ENCODE measurements at regions of chr2 and their contacts with region 1.

Region 1: DNA sequence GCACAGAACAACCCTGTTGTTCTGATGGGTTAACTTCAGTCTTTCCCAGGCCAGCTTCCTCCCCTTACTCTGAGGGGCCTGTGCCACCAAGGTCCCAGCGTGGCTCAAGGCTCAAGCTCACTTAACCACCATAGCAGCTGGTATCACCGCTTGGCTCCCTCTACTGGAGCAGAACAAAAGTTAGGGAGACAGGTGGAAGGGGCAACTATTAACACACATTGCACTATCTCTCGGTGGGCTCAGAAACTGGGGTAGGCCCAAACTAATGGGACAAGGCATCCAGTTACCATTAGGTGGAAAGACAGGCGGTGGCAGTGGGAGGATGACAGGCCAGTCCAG is 88.7 kb upstream of the ATL2 start:
- DNase-seq: no peak
- H3K4me3 Mint-ChIP-seq: no peak overlapping the region
- H3K27ac Mint-ChIP-seq: no peak overlapping the region
- H3K4me1 Mint-ChIP-seq: peaks cover 10% of the 10 kb centered on the region
- H3K27me3 Mint-ChIP-seq: peaks cover 10% of the 10 kb centered on the region

Region 2: DNA sequence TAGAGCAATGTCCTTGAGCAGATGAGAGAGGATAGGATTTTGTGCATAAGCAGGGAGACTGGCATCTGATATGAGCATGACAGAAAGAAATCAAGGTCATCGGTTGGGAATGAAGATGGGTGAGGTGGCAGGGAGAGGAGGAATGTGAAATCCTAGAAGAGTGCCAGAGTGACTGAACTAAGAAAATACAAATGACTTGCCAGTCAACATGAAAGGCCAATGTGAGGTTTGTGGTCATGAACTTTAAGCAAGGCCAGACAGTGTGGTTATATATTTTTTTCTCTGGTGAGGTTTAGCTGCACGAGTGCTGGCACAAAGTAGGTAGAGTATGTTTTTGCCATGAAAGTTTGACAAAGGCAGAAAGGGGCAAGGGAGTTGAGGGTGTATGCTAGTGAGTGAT is 1100.1 kb before region 1 on chr2:
- intact Hi-C with region 1: loop called (anchors 1 kb)
- DNase-seq: no peak
- H3K4me3 Mint-ChIP-seq: no peak overlapping the region
- H3K27ac Mint-ChIP-seq: no peak overlapping the region
- H3K4me1 Mint-ChIP-seq: no peaks in the 10 kb centered on the region
- H3K27me3 Mint-ChIP-seq: peaks cover 31% of the 10 kb centered on the region

Region 3: DNA sequence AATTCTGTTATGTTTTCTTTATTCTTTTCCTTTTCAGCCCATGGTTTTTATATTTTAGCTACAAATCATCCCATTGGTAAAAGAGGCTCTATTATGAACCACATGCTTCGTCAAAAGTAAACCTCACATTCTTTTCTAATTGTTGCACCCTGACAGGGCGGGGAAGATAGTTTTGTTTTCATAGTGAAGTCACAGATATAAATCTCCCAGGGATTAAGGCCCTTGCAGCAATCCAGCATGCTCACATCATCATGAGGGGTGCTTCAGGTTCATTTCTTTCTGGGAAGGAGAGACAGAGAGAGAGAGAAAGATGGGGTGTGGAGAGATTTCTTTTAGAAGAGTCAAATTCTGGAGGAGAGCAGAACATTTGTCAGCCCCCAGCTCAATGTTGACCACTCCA is 669.8 kb before region 1 on chr2:
- intact Hi-C with region 1: no loop called
- DNase-seq: no peak
- H3K4me3 Mint-ChIP-seq: no peak overlapping the region
- H3K27ac Mint-ChIP-seq: no peak overlapping the region
- H3K4me1 Mint-ChIP-seq: peaks cover 4% of the 10 kb centered on the region
- H3K27me3 Mint-ChIP-seq: peaks cover 2% of the 10 kb centered on the region

Region 4: GRCh38 chr2:38037757-38038621 is 427.8 kb before region 1 on chr2:
- intact Hi-C with region 1: loop called (anchors 5 kb)
- DNase-seq: peak; percentile 5
- H3K4me3 Mint-ChIP-seq: peak overlapping the region; percentile 71
- H3K27ac Mint-ChIP-seq: peak overlapping the region; percentile 91
- H3K4me1 Mint-ChIP-seq: peaks cover 22% of the 10 kb centered on the region
- H3K27me3 Mint-ChIP-seq: peaks cover 22% of the 10 kb centered on the region

Region 5: GRCh38 chr2:38106405-38107094 is 359.2 kb before region 1 on chr2:
- intact Hi-C with region 1: loop called (anchors 10 kb)
- DNase-seq: no peak
- H3K4me3 Mint-ChIP-seq: peak overlapping the region; percentile 53
- H3K27ac Mint-ChIP-seq: peak overlapping the region; percentile 57
- H3K4me1 Mint-ChIP-seq: peaks cover 27% of the 10 kb centered on the region
- H3K27me3 Mint-ChIP-seq: no peaks in the 10 kb centered on the region

Region 6: DNA sequence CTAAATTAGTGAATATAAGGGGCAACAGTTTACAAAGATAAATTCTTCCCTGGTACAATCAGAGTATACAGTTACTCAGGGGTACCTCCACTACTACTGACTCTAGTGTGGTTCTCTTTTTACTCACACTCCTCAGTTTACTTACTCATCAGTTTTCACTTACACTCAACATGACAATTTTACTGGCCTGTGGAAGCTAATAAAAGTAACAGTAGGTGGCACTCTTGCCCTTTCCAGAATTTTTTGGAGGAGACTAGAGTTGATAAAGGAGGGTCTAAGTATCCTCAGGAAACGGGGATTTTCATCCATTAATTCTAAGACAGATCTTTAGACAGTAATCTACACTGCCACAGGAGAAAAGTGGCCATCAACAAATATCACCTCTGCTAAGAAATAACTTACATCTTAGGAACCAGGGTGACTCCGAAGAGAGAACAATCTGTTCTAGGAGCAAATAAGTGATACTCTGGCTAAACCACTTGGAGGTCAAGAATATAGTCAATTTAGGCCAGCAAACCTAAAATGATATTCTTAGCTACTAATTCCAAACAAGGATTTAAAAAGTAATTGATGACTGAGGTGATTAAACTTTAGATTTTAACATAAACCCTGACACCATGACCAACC is 149.9 kb before region 1 on chr2:
- intact Hi-C with region 1: loop called (anchors 2 kb)
- DNase-seq: peak; percentile 16
- H3K4me3 Mint-ChIP-seq: no peak overlapping the region
- H3K27ac Mint-ChIP-seq: no peak overlapping the region
- H3K4me1 Mint-ChIP-seq: peaks cover 19% of the 10 kb centered on the region
- H3K27me3 Mint-ChIP-seq: no peaks in the 10 kb centered on the region

Region 7: GRCh38 chr2:38387887-38388286 is 77.9 kb before region 1 on chr2:
- intact Hi-C with region 1: loop called (anchors 1 kb)
- DNase-seq: peak; percentile 9
- H3K4me3 Mint-ChIP-seq: no peak overlapping the region
- H3K27ac Mint-ChIP-seq: no peak overlapping the region
- H3K4me1 Mint-ChIP-seq: peaks cover 23% of the 10 kb centered on the region
- H3K27me3 Mint-ChIP-seq: peaks cover 11% of the 10 kb centered on the region

Region 8: GRCh38 chr2:38432820-38433606 is 32.7 kb before region 1 on chr2:
- intact Hi-C with region 1: no loop called
- DNase-seq: no peak
- H3K4me3 Mint-ChIP-seq: no peak overlapping the region
- H3K27ac Mint-ChIP-seq: no peak overlapping the region
- H3K4me1 Mint-ChIP-seq: no peaks in the 10 kb centered on the region
- H3K27me3 Mint-ChIP-seq: peaks cover 10% of the 10 kb centered on the region

Region 9: DNA sequence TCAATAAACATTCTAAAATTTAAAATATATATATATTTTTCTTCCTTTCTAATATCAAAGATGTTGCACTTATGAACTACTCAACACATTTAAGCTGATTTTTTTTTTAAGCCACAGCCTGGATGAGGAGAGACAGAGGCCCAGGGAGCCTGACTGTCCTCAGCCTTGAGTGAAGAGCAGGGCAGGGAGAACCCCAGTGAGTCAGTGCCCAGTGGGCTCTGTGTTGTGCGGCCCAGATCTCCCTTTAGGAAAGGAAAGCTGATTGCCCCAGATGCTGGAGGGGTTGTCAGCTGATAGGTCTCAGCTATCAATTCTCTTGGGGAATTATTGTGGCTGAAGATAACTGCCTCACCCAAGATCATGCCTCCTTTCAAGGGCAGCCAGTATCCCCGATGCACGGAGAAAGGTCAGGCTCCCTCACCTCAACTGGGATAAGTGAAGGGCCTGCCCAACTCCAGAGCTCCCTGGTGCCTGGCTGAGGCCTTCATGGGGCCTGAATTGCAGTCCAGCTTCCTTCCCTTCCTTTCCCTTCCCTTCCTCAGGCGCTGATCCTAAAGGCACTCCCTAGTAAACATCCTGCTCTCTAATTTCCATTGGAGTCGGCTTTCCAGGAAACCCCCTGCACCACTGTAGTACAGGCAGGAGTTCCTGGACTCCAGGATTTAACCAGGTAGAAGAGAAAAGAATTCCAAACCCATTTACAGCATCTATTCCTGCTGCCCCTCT is 18.2 kb after region 1 on chr2:
- intact Hi-C with region 1: no loop called
- DNase-seq: no peak
- H3K4me3 Mint-ChIP-seq: no peak overlapping the region
- H3K27ac Mint-ChIP-seq: no peak overlapping the region
- H3K4me1 Mint-ChIP-seq: no peaks in the 10 kb centered on the region
- H3K27me3 Mint-ChIP-seq: peaks cover 7% of the 10 kb centered on the region

Measured in activated T-helper 1 cell treated with anti-CD3 and anti-CD28 coated beads, Interleukin-12 subunit alpha, Interleukin-12 subunit beta, Interleukin-2, Interleukin-4 antibody, amounts not matched to agents 30 ng/mL and 10 ng/mL and 1 ng/mL, durations not matched to agents 14 hours and 24 hours and 36 hours (primary cell).